ENCODE measurements at regions of chr18 and their contacts with region 1.

Region 1: GRCh38 chr18:12271376-12272235 is 17.4 kb downstream of the CIDEA start:
- DNase-seq: peak; percentile 77 to 85
- H3K4me3 ChIP-seq: peak overlapping the region in 2 of 3 donors; percentile 36 to 54
- H3K27ac ChIP-seq: peak overlapping the region; percentile 73 to 80 (median 78)
- H3K4me1 ChIP-seq: peaks cover 0 to 9% of the 10 kb centered on the region in 2 donors
- H3K27me3 ChIP-seq: no peaks in the 10 kb centered on the region
- CTCF ChIP-seq: peak; percentile 44 to 79 (median 72)
- POLR2A ChIP-seq: peak in 1 of 2 donors; percentile 6

Region 2: DNA sequence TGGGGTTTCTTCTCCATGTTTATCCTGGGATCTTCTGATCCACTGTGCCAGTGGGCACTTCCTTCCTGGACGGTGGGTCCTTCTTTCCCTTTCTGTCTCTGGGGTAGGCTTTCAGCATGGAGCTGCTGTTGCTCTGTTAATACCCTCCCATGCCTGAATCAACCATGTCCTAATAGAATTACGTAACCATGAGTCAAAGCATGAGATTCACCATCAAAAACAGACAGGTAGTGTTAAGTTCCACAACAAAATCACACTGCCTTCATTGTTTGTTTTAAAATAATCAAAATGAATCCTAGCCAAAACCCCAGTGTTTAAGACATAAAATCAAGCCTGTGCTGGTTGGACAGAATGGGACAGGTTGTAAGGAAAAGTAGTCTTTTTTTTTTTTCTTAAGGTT is 545.0 kb before region 1 on chr18:
- intact Hi-C with region 1: no loop called
- DNase-seq: no peak
- H3K4me3 ChIP-seq: no peak overlapping the region
- H3K27ac ChIP-seq: no peak overlapping the region
- H3K4me1 ChIP-seq: no peaks in the 10 kb centered on the region
- H3K27me3 ChIP-seq: no peaks in the 10 kb centered on the region
- CTCF ChIP-seq: no peak
- POLR2A ChIP-seq: no peak

Region 3: GRCh38 chr18:12308386-12309100 is 36.9 kb after region 1 on chr18:
- intact Hi-C with region 1: loop called (anchors 5 kb)
- DNase-seq: peak; percentile 73 to 77
- H3K4me3 ChIP-seq: peak overlapping the region; percentile 31 to 82 (median 44)
- H3K27ac ChIP-seq: peak overlapping the region; percentile 74 to 92 (median 78)
- H3K4me1 ChIP-seq: peaks cover 9 to 25% of the 10 kb centered on the region in 2 donors
- H3K27me3 ChIP-seq: no peaks in the 10 kb centered on the region
- CTCF ChIP-seq: no peak
- POLR2A ChIP-seq: peak in 1 of 2 donors; percentile 43

Region 4: DNA sequence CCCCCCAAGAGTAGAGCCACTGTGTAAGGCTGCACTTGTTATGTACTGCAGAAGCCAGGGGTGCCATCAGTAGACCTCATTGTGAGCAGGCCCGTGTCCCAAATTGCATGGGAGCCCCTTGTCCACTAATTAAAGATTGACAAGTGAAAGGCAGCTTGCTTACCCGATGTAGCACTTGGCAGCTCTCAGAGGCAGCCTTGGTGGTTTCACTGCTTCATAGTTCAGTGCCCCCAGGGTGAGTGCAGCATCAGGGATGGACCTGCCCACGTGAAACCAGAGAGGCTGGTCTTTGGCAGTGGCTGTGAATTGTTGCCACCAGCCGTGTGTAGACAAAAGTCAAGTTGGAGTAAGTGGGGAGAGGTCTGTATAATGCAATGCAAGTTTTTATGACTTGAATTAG is 49.7 kb after region 1 on chr18:
- intact Hi-C with region 1: no loop called
- DNase-seq: peak; percentile 78 to 84
- H3K4me3 ChIP-seq: no peak overlapping the region
- H3K27ac ChIP-seq: peak overlapping the region in 2 of 3 donors; percentile 31 to 32
- H3K4me1 ChIP-seq: peaks cover 7 to 32% of the 10 kb centered on the region in 2 donors
- H3K27me3 ChIP-seq: no peaks in the 10 kb centered on the region
- CTCF ChIP-seq: no peak
- POLR2A ChIP-seq: no peak

Measured in thyroid gland (tissue), 4 donors.